ENCODE measurements at regions of chr3 and their contacts with region 1.

Region 1: DNA sequence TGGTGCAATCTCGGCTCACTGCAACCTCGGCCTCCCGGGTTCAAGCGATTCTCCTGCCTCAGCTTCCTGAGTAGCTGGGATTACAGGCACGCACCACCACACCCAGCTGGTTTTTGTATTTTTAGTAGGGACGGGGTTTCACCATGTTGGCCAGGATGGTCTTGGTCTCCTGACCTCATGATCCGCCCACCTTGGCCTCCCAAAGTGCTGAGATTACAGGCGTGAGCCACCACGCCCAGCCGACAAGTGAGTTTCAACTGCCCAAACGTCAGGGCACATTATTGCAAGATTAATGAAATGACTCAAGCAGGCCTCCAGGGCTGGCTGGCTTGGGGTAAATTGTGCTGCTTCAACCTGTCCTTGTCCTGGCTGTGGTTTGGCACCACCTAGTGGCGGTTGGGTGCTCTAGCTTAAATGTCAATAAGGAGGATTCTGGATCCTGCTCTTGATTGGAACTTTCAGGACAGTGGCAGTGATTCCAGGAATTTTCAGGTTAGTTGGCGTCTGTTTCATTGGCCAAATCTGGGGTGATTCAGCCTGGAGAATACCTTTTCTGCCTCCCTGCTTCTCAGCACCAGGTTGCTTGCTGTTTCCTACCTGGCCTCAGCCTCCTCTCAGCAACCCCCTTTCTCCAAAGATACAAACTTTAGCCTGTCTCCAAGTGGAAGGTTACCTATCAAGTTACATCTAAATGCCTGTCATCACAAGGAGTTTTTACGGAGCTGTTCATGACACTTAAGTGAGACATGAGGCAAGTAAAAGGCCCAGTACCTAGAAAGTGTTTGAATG is 32.4 kb upstream of the SACM1L start:
- DNase-seq: peak; percentile 92
- H3K4me3 Mint-ChIP-seq: no peak overlapping the region
- H3K27ac Mint-ChIP-seq: no peak overlapping the region
- H3K4me1 Mint-ChIP-seq: peaks cover 19% of the 10 kb centered on the region
- H3K27me3 Mint-ChIP-seq: no peaks in the 10 kb centered on the region

Region 2: GRCh38 chr3:45037734-45038455 is 618.9 kb before region 1 on chr3:
- CTCF ChIA-PET with region 1: interaction called, 12 read pairs
- POLR2A ChIA-PET with region 1: no interaction called
- intact Hi-C with region 1: loop called (anchors 2 kb)
- DNase-seq: peak; percentile 95
- H3K4me3 Mint-ChIP-seq: no peak overlapping the region
- H3K27ac Mint-ChIP-seq: no peak overlapping the region
- H3K4me1 Mint-ChIP-seq: peaks cover 34% of the 10 kb centered on the region
- H3K27me3 Mint-ChIP-seq: peaks cover 28% of the 10 kb centered on the region

Region 3: GRCh38 chr3:45507820-45508317 is 148.9 kb before region 1 on chr3:
- CTCF ChIA-PET with region 1: interaction called, 138 read pairs
- POLR2A ChIA-PET with region 1: interaction called, 8 read pairs
- intact Hi-C with region 1: loop called (anchors 1 kb)
- DNase-seq: no peak
- H3K4me3 Mint-ChIP-seq: no peak overlapping the region
- H3K27ac Mint-ChIP-seq: no peak overlapping the region
- H3K4me1 Mint-ChIP-seq: peaks cover 10% of the 10 kb centered on the region
- H3K27me3 Mint-ChIP-seq: no peaks in the 10 kb centered on the region

Region 4: GRCh38 chr3:45593708-45594609 is 62.8 kb before region 1 on chr3:
- CTCF ChIA-PET with region 1: interaction called, 18 read pairs
- POLR2A ChIA-PET with region 1: interaction called, 3 read pairs
- intact Hi-C with region 1: loop called (anchors 1 kb)
- DNase-seq: peak; percentile 75
- H3K4me3 Mint-ChIP-seq: peak overlapping the region; percentile 84
- H3K27ac Mint-ChIP-seq: peak overlapping the region; percentile 74
- H3K4me1 Mint-ChIP-seq: peaks cover 49% of the 10 kb centered on the region
- H3K27me3 Mint-ChIP-seq: no peaks in the 10 kb centered on the region

Region 5: DNA sequence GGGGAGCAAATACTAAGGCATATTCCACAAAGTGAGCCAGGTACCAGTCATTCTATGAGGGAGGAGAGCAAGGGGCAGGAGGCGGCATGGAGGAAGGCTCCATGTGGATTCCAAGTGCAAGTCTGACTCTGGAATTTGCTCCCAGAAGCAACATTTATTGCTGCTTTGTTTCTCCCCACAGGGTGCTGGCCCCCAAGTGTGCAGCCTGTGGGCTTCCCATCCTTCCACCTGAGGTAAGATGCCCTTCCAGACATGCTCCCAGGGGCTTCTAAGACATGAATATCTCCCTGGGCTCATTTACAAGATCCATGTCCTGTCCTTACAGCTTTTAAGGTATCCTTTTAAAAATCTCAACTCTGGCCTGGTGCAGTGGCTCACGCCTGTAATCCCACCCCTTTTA is 16.5 kb after region 1 on chr3:
- CTCF ChIA-PET with region 1: interaction called, 33 read pairs
- POLR2A ChIA-PET with region 1: no interaction called
- intact Hi-C with region 1: loop called (anchors 1 kb)
- DNase-seq: no peak
- H3K4me3 Mint-ChIP-seq: no peak overlapping the region
- H3K27ac Mint-ChIP-seq: no peak overlapping the region
- H3K4me1 Mint-ChIP-seq: peaks cover 36% of the 10 kb centered on the region
- H3K27me3 Mint-ChIP-seq: no peaks in the 10 kb centered on the region

Region 6: DNA sequence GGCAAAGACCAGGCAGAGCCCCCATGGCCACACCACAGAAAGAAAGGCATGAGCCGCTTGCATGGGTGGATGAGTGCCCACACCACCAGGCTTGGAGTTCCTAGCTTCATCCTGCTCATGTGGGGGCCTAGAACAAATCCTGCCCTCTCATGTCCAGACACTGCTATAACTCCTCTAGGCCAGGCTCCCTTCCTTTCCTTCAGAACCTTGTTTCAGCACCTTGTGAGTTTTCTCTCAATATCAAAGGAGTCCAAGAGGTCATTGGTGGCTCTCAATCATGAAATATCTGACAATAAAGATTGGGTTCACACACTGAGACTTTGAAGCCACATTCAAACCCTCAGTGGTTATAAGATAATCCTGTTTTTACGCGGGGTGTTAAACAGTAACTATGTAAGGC is 126.9 kb after region 1 on chr3:
- CTCF ChIA-PET with region 1: no interaction called
- POLR2A ChIA-PET with region 1: no interaction called
- intact Hi-C with region 1: no loop called
- DNase-seq: no peak
- H3K4me3 Mint-ChIP-seq: no peak overlapping the region
- H3K27ac Mint-ChIP-seq: no peak overlapping the region
- H3K4me1 Mint-ChIP-seq: no peaks in the 10 kb centered on the region
- H3K27me3 Mint-ChIP-seq: no peaks in the 10 kb centered on the region

Region 7: GRCh38 chr3:45938864-45939263 is 282.1 kb after region 1 on chr3:
- CTCF ChIA-PET with region 1: no interaction called
- POLR2A ChIA-PET with region 1: no interaction called
- intact Hi-C with region 1: loop called (anchors 10 kb)
- DNase-seq: peak; percentile 91
- H3K4me3 Mint-ChIP-seq: no peak overlapping the region
- H3K27ac Mint-ChIP-seq: no peak overlapping the region
- H3K4me1 Mint-ChIP-seq: peaks cover 34% of the 10 kb centered on the region
- H3K27me3 Mint-ChIP-seq: peaks cover 2% of the 10 kb centered on the region

Measured in activated CD4-positive, alpha-beta memory T cell treated with anti-CD3 and anti-CD28 coated beads for 36 hours (primary cell).